ENCODE measurements at regions of chr19 and their contacts with region 1.

Region 1: GRCh38 chr19:48588670-48589399 is 17.7 kb upstream of the SPACA4 start:
- DNase-seq: peak; percentile 88 to 95 (median 92)
- H3K4me3 ChIP-seq: peak overlapping the region in 2 of 4 donors; percentile 17 to 46
- H3K27ac ChIP-seq: peak overlapping the region in 3 of 5 donors; percentile 5 to 73 (median 20)
- H3K4me1 ChIP-seq: peaks cover 0 to 11% of the 10 kb centered on the region in 2 donors
- H3K27me3 ChIP-seq: no peaks in the 10 kb centered on the region
- CTCF ChIP-seq: peak; percentile 85 to 97 (median 96)
- POLR2A ChIP-seq: peak in 1 of 2 donors; percentile 14

Region 2: GRCh38 chr19:48310227-48310626 is 278.6 kb before region 1 on chr19:
- intact Hi-C with region 1: loop called in 1 of 2 experiments (anchors 10 kb)
- DNase-seq: peak in 6 of 7 donors; percentile 52 to 77 (median 64)
- H3K4me3 ChIP-seq: no peak overlapping the region
- H3K27ac ChIP-seq: peak overlapping the region in 4 of 5 donors; percentile 14 to 50 (median 40)
- H3K4me1 ChIP-seq: peaks cover 7 to 8% of the 10 kb centered on the region in 2 donors
- H3K27me3 ChIP-seq: no peaks in the 10 kb centered on the region
- CTCF ChIP-seq: no peak
- POLR2A ChIP-seq: no peak

Region 3: DNA sequence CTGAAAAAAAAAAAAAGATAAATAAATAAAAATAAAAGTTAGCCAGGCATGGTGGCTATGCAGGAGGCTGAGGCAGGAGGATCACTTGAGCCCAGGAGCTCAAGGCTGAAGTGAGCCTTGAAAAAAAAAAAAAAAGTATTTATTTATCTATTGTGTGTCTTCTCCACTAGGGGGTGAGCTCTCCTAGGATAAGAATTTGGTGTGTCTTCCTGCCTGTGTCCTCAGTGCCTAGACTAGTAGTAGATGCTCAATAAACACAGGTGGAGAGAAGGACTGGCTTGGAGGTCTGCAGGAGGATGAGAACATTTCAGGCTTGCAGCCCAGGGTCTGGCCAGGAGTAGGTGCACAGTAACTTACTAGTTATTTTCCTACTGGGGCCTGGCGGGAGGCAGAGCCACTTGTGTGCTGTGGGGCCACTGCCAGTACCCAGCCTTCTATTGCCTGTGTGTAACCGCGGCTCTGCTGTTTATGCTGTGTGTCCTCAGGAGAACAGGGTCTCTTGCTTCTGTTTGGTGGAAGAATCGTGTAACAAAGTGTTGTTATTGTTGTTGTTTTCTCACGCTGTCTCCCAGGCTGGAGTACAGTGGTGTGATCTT is 82.6 kb before region 1 on chr19:
- intact Hi-C with region 1: loop called (anchors 5 kb)
- DNase-seq: peak in 3 of 7 donors; percentile 15 to 33 (median 31)
- H3K4me3 ChIP-seq: no peak overlapping the region
- H3K27ac ChIP-seq: no peak overlapping the region
- H3K4me1 ChIP-seq: peaks cover 2% of the 10 kb centered on the region in 2 donors
- H3K27me3 ChIP-seq: peaks cover 4% of the 10 kb centered on the region
- CTCF ChIP-seq: peak; percentile 46 to 87 (median 70)
- POLR2A ChIP-seq: no peak

Region 4: GRCh38 chr19:48674921-48675824 is 86.3 kb after region 1 on chr19:
- intact Hi-C with region 1: no loop called
- DNase-seq: peak; percentile 86 to 95 (median 91)
- H3K4me3 ChIP-seq: no peak overlapping the region
- H3K27ac ChIP-seq: peak overlapping the region in 2 of 5 donors; percentile 59 to 62
- H3K4me1 ChIP-seq: peaks cover 0 to 9% of the 10 kb centered on the region in 2 donors
- H3K27me3 ChIP-seq: no peaks in the 10 kb centered on the region
- CTCF ChIP-seq: peak; percentile 72 to 89 (median 88)
- POLR2A ChIP-seq: no peak

Measured in adrenal gland (tissue), 19 donors.